OCI-LY7 (cell line): ENCODE measurements at regions of chr13 and their contacts with region 1.

Region 1: DNA sequence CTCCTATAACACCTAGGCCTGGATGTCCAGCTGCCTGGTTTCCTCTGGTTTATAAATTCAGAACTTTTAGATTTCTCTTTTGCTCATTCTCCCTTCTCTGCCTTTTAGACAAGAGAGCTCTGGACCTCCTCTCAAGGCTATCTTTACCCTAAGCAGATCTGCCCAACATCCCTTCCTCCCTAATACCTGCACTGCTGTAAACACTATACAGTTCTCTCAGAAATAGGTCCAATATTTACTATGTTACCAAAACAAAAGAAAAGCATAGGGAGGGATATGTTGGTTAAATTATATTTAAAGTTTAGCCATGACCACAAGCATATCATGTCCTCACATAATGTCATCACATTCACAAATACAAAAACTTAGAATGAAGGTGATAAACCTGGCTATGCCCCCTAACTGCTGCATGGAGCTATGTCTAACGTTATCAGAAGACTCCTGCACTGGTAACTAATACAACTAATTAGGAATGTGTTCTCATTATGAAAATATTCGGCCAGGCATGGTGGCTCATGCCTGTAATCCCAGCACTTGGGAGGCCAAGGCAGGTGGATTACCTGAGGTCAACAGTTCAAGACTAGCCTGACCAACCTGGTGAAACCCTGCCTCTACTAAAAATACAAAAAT is 18.0 kb downstream of the KPNA3 start:
- DNase-seq: no peak
- H3K4me3 ChIP-seq: no peak overlapping the region
- H3K27ac ChIP-seq: no peak overlapping the region
- H3K4me1 ChIP-seq: no peaks in the 10 kb centered on the region
- CTCF ChIP-seq: no peak

Region 2: DNA sequence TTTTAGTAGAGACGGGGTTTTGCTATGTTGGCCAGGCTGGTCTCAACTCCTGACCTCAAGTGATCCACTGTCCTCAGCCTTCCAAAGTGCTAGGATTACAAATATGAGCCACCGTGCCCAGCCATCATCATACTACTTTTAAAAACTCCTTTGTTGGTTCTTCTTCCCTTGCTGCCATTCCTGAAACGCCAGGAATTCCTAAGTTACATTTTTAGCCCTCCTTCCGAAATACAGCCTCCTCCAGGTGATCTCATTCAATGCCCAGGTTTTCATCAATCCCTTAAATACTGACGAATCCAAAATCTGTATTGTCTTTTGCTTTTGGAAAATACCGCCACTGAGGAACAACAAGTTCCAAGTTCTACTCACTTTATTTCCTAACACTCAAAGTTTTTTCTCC is 57.9 kb before region 1 on chr13:
- CTCF ChIA-PET with region 1: no interaction called
- POLR2A ChIA-PET with region 1: no interaction called
- intact Hi-C with region 1: loop called (anchors 5 kb)
- DNase-seq: no peak
- H3K4me3 ChIP-seq: no peak overlapping the region
- H3K27ac ChIP-seq: no peak overlapping the region
- H3K4me1 ChIP-seq: no peaks in the 10 kb centered on the region
- CTCF ChIP-seq: no peak